AG04450 (cell line): ENCODE measurements at regions of chr6 and their contacts with region 1.

Region 1: DNA sequence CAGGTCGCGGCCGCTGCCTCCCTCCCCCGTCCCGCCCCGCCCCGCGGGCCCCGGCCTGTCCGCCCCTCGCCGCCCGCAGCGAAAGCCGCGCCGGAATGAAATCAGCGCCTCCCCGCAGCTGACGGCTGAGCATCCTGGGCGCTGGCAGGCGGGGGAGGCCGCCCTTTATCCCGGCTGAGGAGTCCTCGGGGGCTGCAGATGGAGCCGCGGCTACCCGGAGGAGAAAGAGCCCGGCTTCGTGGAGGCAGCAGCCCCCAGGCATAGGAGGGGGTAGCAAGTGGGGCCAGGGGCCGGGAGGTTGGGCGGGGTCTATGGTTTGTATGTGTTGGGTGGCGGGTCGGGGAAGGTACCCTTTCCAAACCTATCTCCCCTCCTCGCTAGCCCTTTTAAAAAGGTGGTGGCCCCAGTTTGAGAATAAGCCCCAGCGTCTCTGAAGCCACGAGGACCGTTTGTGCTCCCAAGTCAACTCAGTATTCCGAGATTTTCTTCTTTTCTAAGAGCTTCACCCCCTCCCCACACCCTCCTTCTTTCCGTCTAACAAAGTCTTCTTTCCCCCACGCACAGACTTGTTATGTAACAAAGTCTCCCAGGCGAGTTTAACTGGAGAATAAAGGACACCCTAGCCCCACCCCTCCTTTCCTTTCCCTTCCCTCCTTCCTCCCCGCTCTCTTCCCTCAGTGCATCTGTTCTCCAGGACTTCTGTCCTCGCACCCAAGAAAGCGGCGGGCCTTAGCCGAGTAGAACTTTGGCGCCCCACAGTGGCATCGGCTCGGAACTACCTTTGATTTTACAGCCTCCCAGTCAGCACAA is 11.0 kb downstream of the POU3F2 start:
- DNase-seq: peak; percentile 50
- H3K4me3 ChIP-seq: peak overlapping the region; percentile 10; the same call in 1 of the 2 replicates
- H3K27ac ChIP-seq: no peak overlapping the region
- H3K27me3 ChIP-seq: peaks cover 80% of the 10 kb centered on the region
- CTCF ChIP-seq: peak; percentile 95

Region 2: DNA sequence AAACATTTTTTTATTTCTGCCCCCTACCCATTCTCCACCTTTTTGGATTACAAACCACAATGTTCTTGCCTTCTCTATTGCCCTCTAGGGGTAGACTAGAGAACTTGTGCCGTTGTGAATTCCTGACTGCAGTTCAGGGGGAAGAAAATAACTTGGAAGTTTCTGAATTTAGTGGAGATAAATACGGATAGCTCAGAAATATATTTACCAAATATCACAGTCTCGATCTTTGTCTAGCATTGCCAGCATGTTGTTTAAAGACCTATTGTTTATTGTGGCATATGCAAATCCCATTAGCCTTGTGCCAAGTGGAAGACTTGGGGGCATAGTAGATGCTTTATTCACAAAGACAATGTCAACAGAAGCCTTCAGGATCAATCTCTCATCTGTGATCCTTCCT is 1408.3 kb before region 1 on chr6:
- CTCF ChIA-PET with region 1: interaction called, 10 read pairs
- POLR2A ChIA-PET with region 1: no interaction called
- DNase-seq: no peak
- H3K4me3 ChIP-seq: no peak overlapping the region
- H3K27ac ChIP-seq: no peak overlapping the region
- H3K27me3 ChIP-seq: no peaks in the 10 kb centered on the region
- CTCF ChIP-seq: peak; percentile 95

Region 3: DNA sequence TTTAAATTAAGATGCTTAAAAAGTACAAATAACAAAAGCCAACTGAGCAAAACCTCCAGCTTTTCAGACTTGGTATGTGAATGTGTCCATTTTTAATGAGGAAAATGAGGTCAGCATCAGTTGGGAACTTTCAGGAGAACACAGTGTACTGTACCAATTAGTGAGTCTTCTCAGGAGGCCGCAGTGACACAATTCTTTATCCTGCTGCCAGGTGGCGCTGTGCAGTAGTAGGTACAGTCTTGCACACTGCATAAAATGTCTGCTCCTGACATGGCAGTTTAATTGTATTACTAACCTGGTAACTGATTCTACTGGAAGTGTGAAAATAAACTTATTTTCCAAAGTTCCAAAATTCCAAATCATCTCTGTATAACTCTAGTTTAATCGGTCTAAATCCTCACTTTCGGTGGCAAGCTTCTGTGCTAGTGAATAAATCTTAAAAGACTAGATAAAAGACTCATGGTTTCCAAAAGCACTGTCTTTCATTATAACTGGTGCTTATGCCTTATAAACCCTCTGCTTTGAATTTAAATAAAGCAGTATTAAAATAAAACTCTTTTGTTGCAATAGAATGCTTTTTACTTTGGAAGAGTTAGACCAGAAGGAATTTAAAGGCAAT is 1347.6 kb before region 1 on chr6:
- CTCF ChIA-PET with region 1: interaction called, 30 read pairs
- POLR2A ChIA-PET with region 1: no interaction called
- DNase-seq: peak; percentile 39
- H3K4me3 ChIP-seq: no peak overlapping the region
- H3K27ac ChIP-seq: no peak overlapping the region
- H3K27me3 ChIP-seq: no peaks in the 10 kb centered on the region
- CTCF ChIP-seq: peak; percentile 93

Region 4: DNA sequence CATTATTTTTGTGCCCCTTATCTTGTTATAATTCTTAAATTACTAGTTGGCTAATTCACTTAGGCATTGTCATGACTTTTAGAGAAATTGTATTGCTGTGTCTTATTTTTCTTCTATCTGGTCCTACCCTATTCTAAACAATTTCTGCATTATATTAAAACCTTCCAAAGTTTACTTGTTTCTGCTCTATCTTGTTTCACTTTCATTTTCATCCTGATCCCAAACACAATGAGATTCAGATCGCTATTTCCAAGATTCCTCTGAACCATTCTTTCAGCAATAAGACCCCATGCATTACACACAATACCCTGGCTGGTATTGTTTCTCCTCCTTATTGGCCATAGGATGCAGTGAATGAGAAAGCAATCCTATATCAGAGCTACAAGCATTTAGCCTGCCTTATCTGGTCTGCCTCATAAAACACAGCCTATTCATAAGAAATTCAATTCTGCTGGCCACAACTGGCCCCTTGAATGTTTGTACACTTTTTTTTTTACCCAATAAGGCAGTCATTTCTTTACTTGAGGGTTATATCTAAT is 81.0 kb before region 1 on chr6:
- CTCF ChIA-PET with region 1: no interaction called
- POLR2A ChIA-PET with region 1: no interaction called
- DNase-seq: no peak
- H3K4me3 ChIP-seq: peak overlapping the region; percentile 40
- H3K27ac ChIP-seq: no peak overlapping the region
- H3K27me3 ChIP-seq: no peaks in the 10 kb centered on the region
- CTCF ChIP-seq: no peak

Region 5: DNA sequence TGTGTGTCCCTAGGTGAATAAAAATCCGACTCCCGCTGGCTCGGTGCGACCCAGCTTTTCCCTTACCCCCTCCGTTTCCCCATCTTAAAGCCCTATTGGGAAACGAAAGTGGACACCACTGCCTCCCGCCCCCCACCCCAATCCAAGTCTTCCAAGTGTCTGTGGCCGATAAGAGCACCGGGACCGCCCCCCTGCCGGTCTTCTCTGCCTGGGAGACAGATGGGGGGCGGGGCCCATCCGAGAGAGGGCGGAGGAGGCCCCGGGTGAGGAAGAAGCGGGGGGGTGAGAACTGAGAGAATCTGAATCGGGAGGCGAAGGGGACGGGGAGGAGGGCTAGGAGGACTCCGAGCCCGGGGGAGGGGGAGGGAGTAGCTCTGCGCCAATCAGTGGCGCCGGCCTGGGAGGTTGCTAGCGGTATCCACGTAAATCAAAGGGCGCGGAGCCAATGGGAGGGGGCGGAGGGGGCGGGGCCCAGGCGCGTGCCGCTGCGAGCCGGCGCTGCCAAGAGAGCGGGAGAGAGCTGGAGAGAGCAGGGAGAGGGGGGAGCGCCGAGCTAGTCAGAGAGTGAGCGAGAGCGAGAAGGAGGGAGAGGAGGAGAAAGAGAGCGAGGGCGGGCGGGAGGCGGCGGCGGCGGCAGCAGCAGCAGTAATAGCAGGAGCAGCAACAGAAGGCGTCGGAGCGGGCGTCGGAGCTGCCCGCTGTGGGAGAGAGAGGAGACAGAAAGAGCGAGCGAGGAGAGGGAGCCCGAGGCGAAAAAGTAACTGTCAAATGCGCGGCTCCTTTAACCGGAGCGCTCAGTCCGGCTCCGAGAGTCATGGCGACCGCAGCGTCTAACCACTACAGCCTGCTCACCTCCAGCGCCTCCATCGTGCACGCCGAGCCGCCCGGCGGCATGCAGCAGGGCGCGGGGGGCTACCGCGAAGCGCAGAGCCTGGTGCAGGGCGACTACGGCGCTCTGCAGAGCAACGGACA is 11.1 kb before region 1 on chr6 and contains the start of gene POU3F2:
- CTCF ChIA-PET with region 1: interaction called, 30 read pairs
- POLR2A ChIA-PET with region 1: no interaction called
- DNase-seq: peak; percentile 34
- H3K4me3 ChIP-seq: peak within 1 kb of the TSS; percentile 55
- H3K27ac ChIP-seq: no peak within 1 kb of the TSS
- H3K27me3 ChIP-seq: peaks cover 78% of the 10 kb centered on the region
- CTCF ChIP-seq: no peak
- polyA plus RNA-seq, gene POU3F2: not detected in 2 replicates

Region 6: GRCh38 chr6:99119109-99120031 is 274.0 kb after region 1 on chr6:
- CTCF ChIA-PET with region 1: interaction called, 14 read pairs
- POLR2A ChIA-PET with region 1: no interaction called
- DNase-seq: peak; percentile 4
- H3K4me3 ChIP-seq: no peak overlapping the region
- H3K27ac ChIP-seq: no peak overlapping the region
- H3K27me3 ChIP-seq: no peaks in the 10 kb centered on the region
- CTCF ChIP-seq: peak; percentile 82